Dendritic cell treated with granulocyte-macrophage colony-stimulating factor and Interleukin-4, amounts not matched to agents 40 ng/mL and 50 ng/mL, for 4 days (primary cell): ENCODE measurements at regions of chr17 and their contacts with region 1.

Region 1: DNA sequence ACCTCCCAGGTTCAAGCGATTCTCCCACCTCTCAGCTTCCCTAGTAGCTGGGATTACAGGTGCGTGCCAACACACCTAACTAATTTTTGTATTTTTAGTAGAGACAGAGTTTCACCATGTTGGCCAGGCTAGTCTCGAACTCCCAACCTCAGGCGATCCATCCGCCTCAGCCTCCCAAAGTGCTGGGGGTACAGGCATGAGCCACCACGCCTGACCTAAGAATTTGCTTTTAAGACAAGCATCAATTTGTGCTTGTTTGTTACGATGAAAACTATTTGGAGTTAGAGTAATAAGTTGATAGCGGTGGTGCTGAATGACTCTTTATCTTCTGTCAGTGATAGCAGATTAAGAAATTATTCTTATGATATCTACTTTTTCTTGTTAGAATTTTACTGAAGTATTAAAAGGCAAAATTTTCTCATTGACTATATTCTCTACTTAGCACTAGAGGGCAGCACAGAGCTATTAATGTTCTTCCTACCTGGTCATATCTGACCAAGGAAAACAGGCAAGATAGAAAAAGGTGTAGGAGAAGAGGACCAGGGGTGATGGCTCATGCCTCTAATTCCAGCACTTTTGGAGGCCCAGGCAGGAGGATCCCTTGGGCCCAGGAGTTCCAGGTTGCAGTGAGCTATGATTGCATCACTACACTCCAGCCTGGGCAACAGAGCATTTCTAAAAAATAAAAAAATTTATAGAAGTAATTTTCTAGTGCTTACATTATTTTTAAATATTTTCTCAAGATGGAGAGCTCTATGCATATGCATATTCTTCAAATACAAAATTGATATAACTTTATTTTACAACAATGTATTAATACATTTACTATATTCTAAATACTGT is 24.5 kb downstream of the STXBP4 start:
- H3K4me3 Mint-ChIP-seq: no peak overlapping the region
- H3K27ac Mint-ChIP-seq: no peak overlapping the region
- H3K4me1 Mint-ChIP-seq: no peaks in the 10 kb centered on the region
- H3K27me3 Mint-ChIP-seq: no peaks in the 10 kb centered on the region

Region 2: GRCh38 chr17:54948380-54948779 is 44.6 kb before region 1 on chr17:
- intact Hi-C with region 1: no loop called
- H3K4me3 Mint-ChIP-seq: no peak overlapping the region
- H3K27ac Mint-ChIP-seq: no peak overlapping the region
- H3K4me1 Mint-ChIP-seq: no peaks in the 10 kb centered on the region
- H3K27me3 Mint-ChIP-seq: no peaks in the 10 kb centered on the region

Region 3: GRCh38 chr17:55295411-55296170 is 302.6 kb after region 1 on chr17:
- intact Hi-C with region 1: loop called (anchors 1 kb)
- H3K4me3 Mint-ChIP-seq: no peak overlapping the region
- H3K27ac Mint-ChIP-seq: no peak overlapping the region
- H3K4me1 Mint-ChIP-seq: peaks cover 12% of the 10 kb centered on the region
- H3K27me3 Mint-ChIP-seq: no peaks in the 10 kb centered on the region

Region 4: GRCh38 chr17:55348749-55349354 is 355.8 kb after region 1 on chr17:
- intact Hi-C with region 1: loop called (anchors 1 kb)
- H3K4me3 Mint-ChIP-seq: no peak overlapping the region
- H3K27ac Mint-ChIP-seq: no peak overlapping the region
- H3K4me1 Mint-ChIP-seq: peaks cover 5% of the 10 kb centered on the region
- H3K27me3 Mint-ChIP-seq: peaks cover 5% of the 10 kb centered on the region

Region 5: DNA sequence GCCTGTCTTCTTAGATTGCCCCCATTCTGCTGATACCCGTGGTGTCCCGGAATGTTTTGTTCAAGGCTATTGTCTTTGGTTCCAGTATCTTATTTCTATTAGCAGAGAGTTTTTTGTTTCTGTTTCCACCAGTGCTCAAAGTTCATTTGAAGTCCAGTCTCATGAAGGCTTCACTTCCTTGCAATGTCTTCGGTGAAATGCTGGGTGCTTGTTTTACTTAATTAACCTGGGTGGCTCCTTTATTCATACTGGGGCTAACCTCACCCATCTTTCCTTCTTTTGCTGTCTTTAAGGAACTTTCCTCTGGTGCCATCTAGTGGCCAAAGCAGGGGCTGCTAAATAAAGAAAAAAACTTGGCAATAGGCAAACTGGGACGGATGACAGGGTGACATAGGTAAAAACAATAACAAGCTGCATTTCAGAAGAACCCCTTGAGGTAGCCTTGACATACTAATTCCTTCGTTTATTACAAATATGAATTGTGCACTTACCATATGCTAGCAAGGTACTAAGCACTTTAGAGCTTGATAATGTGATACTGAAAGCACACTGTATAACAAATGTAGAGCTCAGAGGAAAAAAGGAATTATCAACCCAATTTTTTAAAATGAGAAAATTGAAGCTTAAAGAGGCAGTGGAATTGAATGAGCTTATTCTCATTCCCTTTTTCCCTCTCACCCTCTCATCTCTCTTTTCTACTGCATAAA is 521.0 kb after region 1 on chr17:
- intact Hi-C with region 1: loop called (anchors 5 kb)
- H3K4me3 Mint-ChIP-seq: no peak overlapping the region
- H3K27ac Mint-ChIP-seq: no peak overlapping the region
- H3K4me1 Mint-ChIP-seq: no peaks in the 10 kb centered on the region
- H3K27me3 Mint-ChIP-seq: no peaks in the 10 kb centered on the region